Activated naive CD4-positive, alpha-beta T cell treated with anti-CD3 and anti-CD28 coated beads for 36 hours (primary cell): ENCODE measurements at regions of chr7 and their contacts with region 1.

Region 1: GRCh38 chr7:151226875-151227782 is at the start of gene ABCF2:
- DNase-seq: peak; percentile 100
- H3K4me3 Mint-ChIP-seq: peak within 1 kb of the TSS; percentile 99
- H3K27ac Mint-ChIP-seq: peak within 1 kb of the TSS; percentile 81
- H3K4me1 Mint-ChIP-seq: peaks cover 43% of the 10 kb centered on the region
- H3K27me3 Mint-ChIP-seq: no peaks in the 10 kb centered on the region
- total RNA-seq, gene ABCF2: 33.9 to 35.5 TPM

Region 2: GRCh38 chr7:150668472-150668911 is 558.6 kb before region 1 on chr7:
- CTCF ChIA-PET with region 1: no interaction called
- intact Hi-C with region 1: no loop called
- DNase-seq: peak; percentile 71
- H3K4me3 Mint-ChIP-seq: peak overlapping the region; percentile 19
- H3K27ac Mint-ChIP-seq: peak overlapping the region; percentile 95
- H3K4me1 Mint-ChIP-seq: peaks cover 88% of the 10 kb centered on the region
- H3K27me3 Mint-ChIP-seq: no peaks in the 10 kb centered on the region

Region 3: DNA sequence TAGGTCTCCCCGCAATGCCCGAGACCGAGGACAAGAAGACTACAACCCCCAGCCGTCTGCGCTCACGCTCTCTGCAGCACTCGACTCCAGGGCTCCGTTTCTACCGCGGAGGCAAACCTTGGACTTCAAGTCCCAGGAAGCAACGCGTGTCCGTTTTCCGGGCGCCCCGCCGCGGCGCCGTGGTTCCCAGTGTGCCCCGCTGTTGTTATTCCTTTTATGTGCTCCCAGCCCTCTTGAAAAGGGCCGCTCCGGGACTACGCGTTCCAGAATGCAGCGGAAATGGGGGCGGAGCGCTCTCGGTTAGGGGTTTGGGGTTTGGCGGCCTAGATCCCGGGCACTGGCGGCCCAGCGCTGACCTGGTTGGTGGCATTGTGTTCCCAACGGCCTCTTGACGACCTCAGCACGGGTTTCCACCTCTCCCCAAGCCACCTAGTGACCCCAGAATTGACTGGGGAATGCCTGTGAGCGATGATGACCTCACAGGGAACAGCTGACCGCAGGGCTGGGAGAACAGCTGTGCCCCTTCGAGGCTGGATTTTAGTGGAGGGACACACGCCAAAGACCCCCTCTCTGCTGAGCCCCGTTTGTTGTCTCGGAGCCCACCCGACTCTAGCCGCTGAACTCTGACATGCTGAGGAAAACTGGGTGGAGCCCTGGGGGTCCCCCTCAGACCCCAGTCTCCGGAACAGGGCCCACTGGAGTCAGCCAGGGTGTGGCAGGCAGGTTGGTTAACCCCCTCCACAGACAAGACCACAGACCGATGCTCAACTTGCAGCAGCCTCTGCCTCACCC is 168.9 kb before region 1 on chr7:
- CTCF ChIA-PET with region 1: no interaction called
- intact Hi-C with region 1: loop called (anchors 1 kb)
- DNase-seq: peak; percentile 98
- H3K4me3 Mint-ChIP-seq: peak overlapping the region; percentile 85
- H3K27ac Mint-ChIP-seq: peak overlapping the region; percentile 89
- H3K4me1 Mint-ChIP-seq: peaks cover 35% of the 10 kb centered on the region
- H3K27me3 Mint-ChIP-seq: no peaks in the 10 kb centered on the region

Region 4: GRCh38 chr7:151204383-151205032 is 22.6 kb before region 1 on chr7:
- CTCF ChIA-PET with region 1: no interaction called
- intact Hi-C with region 1: no loop called
- DNase-seq: no peak
- H3K4me3 Mint-ChIP-seq: no peak overlapping the region
- H3K27ac Mint-ChIP-seq: no peak overlapping the region
- H3K4me1 Mint-ChIP-seq: peaks cover 17% of the 10 kb centered on the region
- H3K27me3 Mint-ChIP-seq: peaks cover 7% of the 10 kb centered on the region

Region 5: DNA sequence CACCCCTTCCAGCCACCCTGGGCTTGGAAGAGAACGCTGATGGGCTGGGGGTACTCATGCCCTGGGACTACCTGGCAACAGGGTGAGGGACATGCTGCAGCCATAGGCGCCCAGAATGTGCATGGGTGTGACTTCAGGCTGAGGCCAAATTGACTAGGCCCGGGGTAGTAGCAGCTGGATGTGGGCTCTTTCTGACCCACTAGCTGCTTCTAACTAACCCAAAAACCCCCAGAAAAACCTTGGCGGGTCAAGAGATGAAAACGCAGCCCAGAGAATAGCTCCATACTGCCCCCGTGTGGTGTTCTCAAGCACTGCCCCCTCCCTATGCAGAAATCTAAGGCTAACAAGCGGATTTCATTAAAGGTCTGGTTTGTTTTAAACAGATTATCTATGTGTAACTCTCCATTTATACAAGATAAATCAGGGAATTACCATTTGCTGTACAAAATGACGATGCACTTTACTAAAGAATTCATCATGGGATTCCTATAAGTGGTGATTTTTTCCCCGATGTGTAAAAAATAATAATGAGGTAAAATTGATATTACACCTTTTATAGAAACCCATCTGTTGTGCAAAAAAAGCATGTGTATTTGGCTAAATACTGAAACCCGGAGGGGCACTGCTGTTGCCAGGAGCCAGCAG is 17.2 kb after region 1 on chr7:
- CTCF ChIA-PET with region 1: interaction called, 97 read pairs
- intact Hi-C with region 1: loop called (anchors 1 kb)
- DNase-seq: peak; percentile 81
- H3K4me3 Mint-ChIP-seq: peak overlapping the region; percentile 46
- H3K27ac Mint-ChIP-seq: no peak overlapping the region
- H3K4me1 Mint-ChIP-seq: peaks cover 41% of the 10 kb centered on the region
- H3K27me3 Mint-ChIP-seq: peaks cover 26% of the 10 kb centered on the region

Region 6: GRCh38 chr7:151341357-151342101 is 114.4 kb after region 1 on chr7 and contains the start of gene NUB1:
- CTCF ChIA-PET with region 1: no interaction called
- intact Hi-C with region 1: loop called (anchors 1 kb)
- DNase-seq: peak; percentile 92
- H3K4me3 Mint-ChIP-seq: peak within 1 kb of the TSS; percentile 75
- H3K27ac Mint-ChIP-seq: peak within 1 kb of the TSS; percentile 82
- H3K4me1 Mint-ChIP-seq: peaks cover 46% of the 10 kb centered on the region
- H3K27me3 Mint-ChIP-seq: no peaks in the 10 kb centered on the region
- total RNA-seq, gene NUB1: 46.6 to 50.3 TPM